ENCODE measurements at regions of chr6 and their contacts with region 1.

Region 1: GRCh38 chr6:30212865-30213666 is at the start of gene TRIM26:
- DNase-seq: peak; percentile 99
- H3K4me3 ChIP-seq: peak within 1 kb of the TSS; percentile 91 to 96 (median 93)
- H3K27ac ChIP-seq: peak within 1 kb of the TSS; percentile 95 to 98 (median 98)
- H3K4me1 ChIP-seq: peaks cover 0 to 43% (median 34%) of the 10 kb centered on the region in 4 donors
- H3K27me3 ChIP-seq: no peaks in the 10 kb centered on the region
- CTCF ChIP-seq: no peak
- EP300 ChIP-seq: no peak
- POLR2A ChIP-seq: peak; percentile 92 to 96
- total RNA-seq, gene TRIM26: 34.2 to 42.7 (median 41.4) TPM

Region 2: DNA sequence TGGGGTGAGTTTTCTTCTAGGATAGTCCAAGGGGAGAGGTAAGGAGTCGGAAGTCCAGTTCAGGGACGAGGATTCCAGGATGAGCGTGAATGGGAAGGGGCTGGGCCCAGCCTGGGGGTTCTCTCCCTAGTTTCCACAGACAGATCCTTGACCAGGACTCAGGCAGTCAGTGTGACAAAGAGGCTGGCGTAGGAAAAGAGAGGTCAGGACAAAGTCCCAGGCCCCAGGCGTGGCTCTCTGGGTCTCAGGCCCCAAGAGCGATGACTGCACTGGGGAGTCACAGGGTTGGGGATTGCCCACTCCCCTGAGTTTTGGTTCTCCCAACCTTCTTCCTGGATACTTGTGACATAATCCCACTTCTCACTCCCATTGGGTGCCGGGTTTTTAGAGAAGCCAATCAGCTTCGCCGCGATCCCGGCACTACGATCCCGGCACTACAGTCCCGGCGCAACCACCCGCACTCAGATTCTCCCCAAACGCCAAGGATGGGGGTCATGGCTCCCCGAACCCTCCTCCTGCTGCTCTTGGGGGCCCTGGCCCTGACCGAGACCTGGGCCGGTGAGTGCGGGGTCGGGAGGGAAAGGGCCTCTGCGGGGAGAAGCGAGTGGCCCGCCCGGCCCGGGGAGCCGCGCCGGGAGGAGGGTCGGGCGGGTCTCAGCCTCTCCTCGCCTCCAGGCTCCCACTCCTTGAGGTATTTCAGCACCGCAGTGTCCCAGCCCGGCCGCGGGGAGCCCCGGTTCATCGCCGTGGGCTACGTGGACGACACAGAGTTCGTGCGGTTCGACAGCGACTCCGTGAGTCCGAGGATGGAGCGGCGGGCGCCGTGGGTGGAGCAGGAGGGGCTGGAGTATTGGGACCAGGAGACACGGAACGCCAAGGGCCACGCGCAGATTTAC is 46.3 kb after region 1 on chr6:
- intact Hi-C with region 1: loop called (anchors 1 kb)
- DNase-seq: peak; percentile 89
- H3K4me3 ChIP-seq: peak overlapping the region; percentile 72 to 95 (median 81)
- H3K27ac ChIP-seq: peak overlapping the region; percentile 85 to 92 (median 88)
- H3K4me1 ChIP-seq: peaks cover 0 to 9% (median 4%) of the 10 kb centered on the region in 4 donors
- H3K27me3 ChIP-seq: no peaks in the 10 kb centered on the region
- CTCF ChIP-seq: peak in 2 of 4 experiments; percentile 20 to 47
- EP300 ChIP-seq: no peak
- POLR2A ChIP-seq: no peak

Region 3: GRCh38 chr6:30344868-30345671 is 132.0 kb after region 1 on chr6 and contains the start of gene RPP21:
- intact Hi-C with region 1: loop called (anchors 5 kb)
- DNase-seq: peak; percentile 90
- H3K4me3 ChIP-seq: peak within 1 kb of the TSS; percentile 61 to 92 (median 82)
- H3K27ac ChIP-seq: peak within 1 kb of the TSS; percentile 84 to 96 (median 94)
- H3K4me1 ChIP-seq: peaks cover 0 to 15% (median 10%) of the 10 kb centered on the region in 4 donors
- H3K27me3 ChIP-seq: no peaks in the 10 kb centered on the region
- CTCF ChIP-seq: no peak
- EP300 ChIP-seq: no peak
- POLR2A ChIP-seq: peak; percentile 58 to 77
- total RNA-seq, gene RPP21: 134 to 150 (median 141) TPM

Measured in sigmoid colon (tissue), 7 donors.